Activated T-helper 1 cell treated with anti-CD3 and anti-CD28 coated beads, Interleukin-12 subunit alpha, Interleukin-12 subunit beta, Interleukin-2, Interleukin-4 antibody, amounts not matched to agents 30 ng/mL and 10 ng/mL and 1 ng/mL, durations not matched to agents 14 hours and 24 hours and 36 hours (primary cell): ENCODE measurements at regions of chr1 and their contacts with region 1.

Region 1: GRCh38 chr1:200150720-200151119 is 123.2 kb downstream of the NR5A2 start:
- DNase-seq: no peak
- H3K4me3 Mint-ChIP-seq: peak overlapping the region; percentile 20
- H3K27ac Mint-ChIP-seq: peak overlapping the region; percentile 77
- H3K4me1 Mint-ChIP-seq: peaks cover 73% of the 10 kb centered on the region
- H3K27me3 Mint-ChIP-seq: no peaks in the 10 kb centered on the region

Region 2: DNA sequence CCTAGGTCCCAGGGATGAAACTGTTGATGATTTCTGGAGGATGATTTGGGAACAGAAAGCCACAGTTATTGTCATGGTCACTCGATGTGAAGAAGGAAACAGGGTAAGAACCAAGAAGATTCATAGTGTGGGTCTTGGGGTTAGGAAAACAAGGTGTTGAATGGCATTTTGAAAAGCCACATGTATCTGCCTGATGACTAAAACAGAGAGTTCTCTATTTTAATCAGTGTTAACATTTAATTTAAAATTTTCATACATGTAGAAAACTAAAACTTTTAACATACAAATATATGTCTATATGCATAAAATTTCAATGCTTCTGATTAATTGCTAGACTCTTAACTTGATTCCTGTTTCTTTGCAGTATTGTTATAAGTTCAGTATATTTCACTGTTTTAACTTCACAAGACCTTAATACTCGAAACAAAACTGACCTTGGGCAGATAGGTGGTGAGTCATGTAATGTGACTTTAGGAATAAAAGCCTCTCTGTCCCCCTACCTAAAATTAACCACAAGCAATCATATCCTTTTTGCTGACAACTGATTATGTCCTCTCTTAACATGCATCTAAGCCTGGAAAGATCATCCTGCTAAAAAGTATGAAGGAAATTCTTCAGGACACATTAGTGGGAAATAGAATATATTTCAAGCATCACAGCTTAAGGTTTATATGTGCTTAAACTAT is 1416.3 kb before region 1 on chr1:
- intact Hi-C with region 1: loop called (anchors 10 kb)
- DNase-seq: no peak
- H3K4me3 Mint-ChIP-seq: no peak overlapping the region
- H3K27ac Mint-ChIP-seq: peak overlapping the region; percentile 73
- H3K4me1 Mint-ChIP-seq: peaks cover 79% of the 10 kb centered on the region
- H3K27me3 Mint-ChIP-seq: no peaks in the 10 kb centered on the region

Region 3: DNA sequence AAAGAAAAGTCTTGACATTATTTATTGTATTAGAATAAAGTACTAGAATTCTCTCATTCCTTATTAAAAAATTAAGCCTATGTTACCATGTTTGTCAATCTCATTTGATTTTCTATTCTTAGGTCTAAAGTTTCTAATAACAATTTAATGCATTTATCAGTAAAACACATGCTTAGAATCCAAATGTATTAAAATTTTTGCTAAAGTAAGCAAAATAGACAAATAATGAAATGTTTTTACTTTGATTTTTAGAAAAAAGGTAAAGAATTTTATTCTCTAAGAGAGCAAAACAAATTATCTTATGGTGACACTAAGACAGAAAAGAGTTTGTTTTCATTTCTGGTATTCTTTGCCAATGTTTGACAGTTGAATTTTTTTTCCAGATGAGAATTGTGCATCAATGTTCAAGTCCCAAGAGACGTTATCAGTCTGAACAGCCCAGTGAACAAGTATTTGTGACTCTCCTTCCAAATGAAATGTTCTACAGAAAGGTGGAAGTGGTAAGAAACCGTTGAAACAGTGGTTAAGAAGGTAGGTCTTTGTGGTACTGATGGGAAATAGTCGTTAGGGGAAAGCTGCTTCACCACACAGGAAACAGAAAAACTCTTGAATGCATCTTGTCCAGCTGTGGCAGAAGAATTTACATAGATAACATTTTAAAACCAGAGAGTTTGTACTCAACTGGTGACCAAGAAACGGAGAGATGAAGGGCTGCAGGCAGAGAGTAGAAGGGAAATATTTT is 1109.4 kb before region 1 on chr1:
- intact Hi-C with region 1: loop called (anchors 5 kb)
- DNase-seq: peak; percentile 66
- H3K4me3 Mint-ChIP-seq: peak overlapping the region; percentile 35
- H3K27ac Mint-ChIP-seq: peak overlapping the region; percentile 83
- H3K4me1 Mint-ChIP-seq: peaks cover 54% of the 10 kb centered on the region
- H3K27me3 Mint-ChIP-seq: no peaks in the 10 kb centered on the region

Region 4: DNA sequence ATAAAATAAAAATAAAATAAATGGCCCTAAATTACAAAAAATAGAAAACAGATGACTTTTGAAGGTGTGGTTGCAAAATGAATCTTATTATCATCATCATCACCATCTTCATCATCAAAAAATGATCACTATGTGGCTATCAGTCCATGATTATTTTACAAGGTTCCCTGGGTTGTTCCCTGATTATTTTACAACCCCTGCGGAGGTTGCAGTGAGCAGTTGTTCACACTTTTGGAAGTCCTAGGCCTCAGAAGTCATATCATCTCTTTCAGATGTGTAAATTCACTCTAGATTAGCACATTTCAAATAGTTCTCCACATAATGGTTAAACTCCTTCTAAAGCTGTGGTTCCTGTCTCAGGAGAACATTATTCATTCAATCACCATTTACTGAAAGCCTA is 180.6 kb before region 1 on chr1:
- intact Hi-C with region 1: no loop called
- DNase-seq: no peak
- H3K4me3 Mint-ChIP-seq: no peak overlapping the region
- H3K27ac Mint-ChIP-seq: no peak overlapping the region
- H3K4me1 Mint-ChIP-seq: no peaks in the 10 kb centered on the region
- H3K27me3 Mint-ChIP-seq: peaks cover 16% of the 10 kb centered on the region

Region 5: GRCh38 chr1:200139661-200140250 is 11.0 kb before region 1 on chr1:
- intact Hi-C with region 1: loop called (anchors 1 kb)
- DNase-seq: no peak
- H3K4me3 Mint-ChIP-seq: no peak overlapping the region
- H3K27ac Mint-ChIP-seq: no peak overlapping the region
- H3K4me1 Mint-ChIP-seq: peaks cover 29% of the 10 kb centered on the region
- H3K27me3 Mint-ChIP-seq: peaks cover 11% of the 10 kb centered on the region

Region 6: DNA sequence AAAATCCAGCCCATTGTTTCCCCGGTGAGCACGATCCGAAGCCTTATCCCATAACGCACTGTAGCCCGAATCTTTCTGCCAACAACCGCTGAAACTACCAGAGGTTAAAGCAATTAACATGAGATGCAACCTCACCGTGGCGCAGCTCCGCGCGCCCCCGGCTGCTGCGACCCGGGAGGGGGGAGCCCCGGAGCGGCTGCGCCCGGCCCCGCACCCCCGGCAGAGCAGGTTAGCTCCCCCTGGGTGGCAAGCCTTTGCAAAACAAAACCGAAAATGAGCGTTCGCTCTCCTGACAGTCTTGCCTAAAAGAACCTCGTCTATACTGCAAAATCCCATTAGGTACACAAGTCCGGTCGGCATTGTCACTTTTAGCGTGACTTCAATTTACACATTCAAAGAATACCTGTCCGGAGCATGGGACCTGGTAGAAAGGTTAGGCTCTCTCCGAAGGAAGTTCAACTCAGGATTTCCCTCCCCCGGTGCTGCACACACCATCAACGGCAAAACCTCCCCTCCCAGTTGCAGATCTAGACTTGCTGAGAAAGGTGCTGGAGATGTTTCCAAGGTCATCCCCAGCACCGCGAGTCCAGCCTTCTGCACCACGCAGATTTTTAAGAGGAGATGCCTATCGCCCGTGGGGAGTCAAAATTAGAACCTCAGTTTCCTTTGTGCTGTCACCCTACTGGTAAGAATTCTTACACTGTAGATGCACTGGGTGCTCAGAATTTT is 151.6 kb after region 1 on chr1:
- intact Hi-C with region 1: loop called (anchors 2 kb)
- DNase-seq: peak; percentile 53
- H3K4me3 Mint-ChIP-seq: peak overlapping the region; percentile 83
- H3K27ac Mint-ChIP-seq: no peak overlapping the region
- H3K4me1 Mint-ChIP-seq: peaks cover 23% of the 10 kb centered on the region
- H3K27me3 Mint-ChIP-seq: peaks cover 17% of the 10 kb centered on the region

Region 7: DNA sequence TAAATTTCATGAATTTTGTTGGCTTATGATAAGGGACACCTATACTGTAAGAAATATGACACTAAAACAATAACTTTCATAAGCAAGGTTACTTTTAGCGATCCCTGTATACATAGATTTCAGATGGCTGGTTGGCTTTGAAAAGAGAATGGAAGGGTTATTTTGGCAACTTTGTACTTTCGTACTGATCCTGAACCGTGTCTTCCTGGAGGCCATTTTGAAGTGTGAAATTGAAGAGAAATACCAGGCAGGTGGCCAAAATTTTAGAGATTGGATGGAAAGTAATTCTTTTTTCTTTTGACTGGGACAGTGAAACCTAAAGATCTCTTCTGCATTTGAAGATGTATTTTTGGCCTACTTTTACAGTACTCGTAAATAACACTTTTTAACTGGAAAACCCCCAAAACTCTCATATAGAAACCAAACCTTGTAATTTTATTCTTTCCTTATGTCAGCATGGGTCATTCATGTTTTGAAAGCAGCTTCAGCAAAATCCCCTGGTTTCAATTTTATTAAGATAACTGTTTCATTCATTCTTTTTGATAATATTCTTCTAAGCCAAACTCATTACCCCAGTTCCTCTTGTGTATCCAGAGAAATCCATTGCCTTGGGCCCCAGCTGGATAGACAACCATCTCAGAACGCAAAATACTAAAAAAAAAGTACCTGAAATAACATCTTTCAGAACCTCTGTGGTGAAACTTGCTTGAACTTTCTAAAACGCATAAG is 297.5 kb after region 1 on chr1:
- intact Hi-C with region 1: loop called (anchors 1 kb)
- DNase-seq: no peak
- H3K4me3 Mint-ChIP-seq: peak overlapping the region; percentile 53
- H3K27ac Mint-ChIP-seq: peak overlapping the region; percentile 97
- H3K4me1 Mint-ChIP-seq: peaks cover 59% of the 10 kb centered on the region
- H3K27me3 Mint-ChIP-seq: no peaks in the 10 kb centered on the region

Region 8: GRCh38 chr1:200510228-200510623 is 359.5 kb after region 1 on chr1:
- intact Hi-C with region 1: no loop called
- DNase-seq: peak; percentile 47
- H3K4me3 Mint-ChIP-seq: no peak overlapping the region
- H3K27ac Mint-ChIP-seq: no peak overlapping the region
- H3K4me1 Mint-ChIP-seq: peaks cover 4% of the 10 kb centered on the region
- H3K27me3 Mint-ChIP-seq: peaks cover 23% of the 10 kb centered on the region

Region 9: DNA sequence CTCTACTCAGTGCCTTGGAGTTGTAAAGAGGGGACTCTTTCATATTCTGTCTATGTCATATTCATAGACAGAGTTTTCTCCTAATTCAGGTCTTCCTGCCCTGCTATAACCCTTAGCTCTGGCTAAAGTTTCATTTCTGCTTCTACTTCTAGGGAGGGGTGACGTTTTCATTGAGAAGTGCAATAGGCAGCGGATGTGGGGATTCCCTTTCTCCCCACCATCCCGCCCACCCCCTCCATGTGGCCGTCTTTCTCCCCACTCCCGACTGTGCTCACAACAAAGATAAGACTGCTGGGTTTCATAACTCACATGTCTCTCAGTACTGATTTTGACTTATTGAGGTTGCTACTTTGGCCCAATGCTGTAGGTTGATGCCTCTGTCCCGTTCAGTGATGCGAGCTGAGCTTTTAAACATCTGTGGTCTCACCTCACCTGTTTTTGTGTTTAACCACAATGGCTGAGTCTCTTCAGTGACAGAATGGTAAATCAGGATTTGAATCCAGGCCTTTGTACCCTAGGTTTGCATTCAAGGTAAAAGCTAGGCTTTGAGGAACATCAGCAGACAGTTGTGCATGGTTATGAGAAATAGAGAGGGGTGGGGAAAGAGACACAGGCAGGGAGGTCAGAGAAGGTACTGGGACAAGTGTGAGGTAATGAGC is 477.6 kb after region 1 on chr1:
- intact Hi-C with region 1: loop called (anchors 5 kb)
- DNase-seq: no peak
- H3K4me3 Mint-ChIP-seq: peak overlapping the region; percentile 32
- H3K27ac Mint-ChIP-seq: peak overlapping the region; percentile 42
- H3K4me1 Mint-ChIP-seq: peaks cover 45% of the 10 kb centered on the region
- H3K27me3 Mint-ChIP-seq: no peaks in the 10 kb centered on the region